K562 (cell line): ENCODE measurements at regions of chr22 and their contacts with region 1.

Region 1: DNA sequence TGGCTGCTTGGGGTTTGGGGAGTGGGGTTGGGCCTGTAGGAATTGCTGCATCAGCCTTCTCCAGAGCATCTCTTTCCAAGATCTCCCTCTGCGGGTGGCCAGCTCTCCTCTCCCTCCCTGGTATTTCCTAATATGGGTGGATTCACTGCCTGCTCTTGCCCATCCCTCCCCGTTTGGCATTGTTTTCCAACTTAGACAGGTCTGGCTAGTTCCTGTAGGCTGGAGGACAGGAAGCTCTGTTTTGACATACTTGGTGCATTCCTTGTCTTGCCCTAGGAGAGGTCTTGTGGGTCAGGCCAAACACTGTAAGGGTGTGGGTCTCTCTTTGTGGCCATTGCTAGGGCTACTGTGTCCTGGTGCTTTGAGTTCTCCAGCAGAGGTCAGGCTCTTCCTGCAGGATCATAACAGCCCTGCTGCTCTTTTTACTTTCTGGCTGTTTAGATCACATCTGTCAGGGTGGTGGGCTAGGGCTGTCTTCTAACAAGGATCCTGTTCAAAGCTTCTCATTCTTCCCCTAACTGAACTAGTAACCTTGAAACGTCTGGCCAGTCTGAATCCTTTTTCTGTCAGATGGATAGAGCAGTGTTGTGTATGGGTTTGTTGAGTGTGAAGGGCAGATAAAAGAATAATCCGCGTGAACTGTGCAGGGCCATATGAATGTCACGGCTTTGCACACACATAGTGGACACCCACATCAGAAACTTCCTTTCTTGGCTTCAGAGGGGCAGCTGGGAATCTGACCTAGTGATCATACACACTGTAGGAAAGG is 18.3 kb upstream of the MICALL1 start:
- DNase-seq: no peak
- ATAC-seq: peak; percentile 74
- H3K4me3 ChIP-seq: no peak overlapping the region
- H3K27ac ChIP-seq: no peak overlapping the region
- H3K4me1 ChIP-seq: peaks cover 0 to under 1% of the 10 kb centered on the region in 2 experiments; a peak in 3 of 5 replicates
- H3K27me3 ChIP-seq: no peaks in the 10 kb centered on the region
- CTCF ChIP-seq: peak in 2 of 3 experiments; percentile 31 to 53; a peak in 3 of 6 replicates
- EP300 ChIP-seq: no peak
- POLR2A ChIP-seq: no peak
- RAD21 ChIP-seq: peak; percentile 14 to 51; a peak in 3 of 4 replicates

Region 2: DNA sequence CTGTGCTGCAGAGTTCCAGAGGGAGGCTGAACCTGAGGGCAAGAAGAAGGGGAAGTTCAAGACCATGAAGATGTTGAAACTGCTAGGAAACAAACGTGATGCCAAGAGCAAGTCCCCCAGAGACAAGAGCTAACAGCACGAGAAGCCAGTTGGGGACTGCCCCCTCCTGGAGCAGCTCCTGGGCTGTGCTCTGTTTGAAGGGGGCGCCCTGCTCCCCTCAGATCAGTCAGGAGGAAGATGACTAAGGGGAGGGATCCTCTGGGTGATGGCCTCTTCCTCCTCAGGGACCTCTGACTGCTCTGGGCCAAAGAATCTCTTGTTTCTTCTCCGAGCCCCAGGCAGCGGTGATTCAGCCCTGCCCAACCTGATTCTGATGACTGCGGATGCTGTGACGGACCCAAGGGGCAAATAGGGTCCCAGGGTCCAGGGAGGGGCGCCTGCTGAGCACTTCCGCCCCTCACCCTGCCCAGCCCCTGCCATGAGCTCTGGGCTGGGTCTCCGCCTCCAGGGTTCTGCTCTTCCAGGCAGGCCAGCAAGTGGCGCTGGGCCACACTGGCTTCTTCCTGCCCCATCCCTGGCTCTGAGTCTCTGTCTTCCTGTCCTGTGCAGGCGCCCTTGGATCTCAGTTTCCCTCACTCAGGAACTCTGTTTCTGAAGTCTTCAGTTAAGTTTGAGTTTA is 53.0 kb after region 1 on chr22:
- CTCF ChIA-PET with region 1: no interaction called
- POLR2A ChIA-PET with region 1: no interaction called
- in situ Hi-C with region 1: no loop called
- intact Hi-C with region 1: no loop called
- DNase-seq: no peak
- ATAC-seq: peak; percentile 46; the same call in 2 of the 3 replicates
- H3K4me3 ChIP-seq: no peak overlapping the region
- H3K27ac ChIP-seq: no peak overlapping the region
- H3K4me1 ChIP-seq: no peaks in the 10 kb centered on the region; a peak in 2 of 5 replicates
- H3K27me3 ChIP-seq: no peaks in the 10 kb centered on the region
- CTCF ChIP-seq: 0 out of 6 replicates have a peak, but pooled peaks of 1 of the 3 experiments have one; percentile 2
- EP300 ChIP-seq: no peak
- POLR2A ChIP-seq: no peak
- RAD21 ChIP-seq: no peak

Region 3: DNA sequence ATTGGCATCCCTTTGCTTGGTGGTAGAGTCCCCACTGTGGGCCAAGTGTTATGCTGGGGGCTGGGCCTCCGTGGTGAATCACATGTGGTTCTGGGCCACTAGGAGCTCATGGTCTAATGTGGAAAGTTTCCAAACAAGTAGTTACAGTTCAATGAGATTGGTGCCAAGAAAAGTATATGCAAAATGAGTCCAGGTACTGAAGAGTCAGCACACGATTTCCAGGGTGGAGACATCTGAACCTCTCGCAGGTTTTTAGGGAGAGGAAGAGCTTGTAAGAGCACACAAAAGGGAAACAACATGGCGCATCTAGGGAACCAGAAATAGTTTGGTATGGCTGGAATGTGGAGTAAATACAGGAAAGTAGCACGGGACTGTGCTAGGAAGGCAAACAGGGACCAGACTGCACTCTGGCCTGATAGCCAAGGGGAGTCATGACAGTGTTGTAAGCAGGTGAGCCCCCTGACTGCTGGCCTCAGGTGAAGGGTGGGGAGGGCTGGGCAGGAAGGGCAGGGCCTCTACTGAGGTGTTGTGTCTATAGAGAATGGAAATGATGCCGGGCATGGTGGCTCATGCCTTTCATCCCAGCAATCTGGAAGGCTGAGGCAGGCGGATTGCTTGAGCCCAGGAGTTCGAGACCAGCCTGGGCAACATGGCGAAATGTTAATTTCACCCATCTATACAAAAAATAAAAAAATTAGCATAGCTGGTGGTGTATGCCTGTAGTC is 78.3 kb after region 1 on chr22:
- CTCF ChIA-PET with region 1: interaction called, 6 read pairs
- POLR2A ChIA-PET with region 1: no interaction called
- in situ Hi-C with region 1: no loop called
- intact Hi-C with region 1: loop called (anchors 2 kb)
- DNase-seq: no peak
- ATAC-seq: no peak
- H3K4me3 ChIP-seq: no peak overlapping the region
- H3K27ac ChIP-seq: no peak overlapping the region
- H3K4me1 ChIP-seq: no peaks in the 10 kb centered on the region
- H3K27me3 ChIP-seq: no peaks in the 10 kb centered on the region
- CTCF ChIP-seq: no peak
- EP300 ChIP-seq: no peak
- POLR2A ChIP-seq: no peak
- RAD21 ChIP-seq: no peak